Left colon (tissue), 2 donors: ENCODE measurements at regions of chr7 and their contacts with region 1.

Region 1: GRCh38 chr7:95718556-95719410 is 53.6 kb upstream of the DYNC1I1 start:
- DNase-seq: no peak
- ATAC-seq: no peak

Region 2: GRCh38 chr7:95871078-95871782 is 152.4 kb after region 1 on chr7:
- intact Hi-C with region 1: loop called in 1 of 2 experiments (anchors 5 kb)
- DNase-seq: no peak
- ATAC-seq: no peak